Dendritic cell treated with granulocyte-macrophage colony-stimulating factor and Interleukin-4, amounts not matched to agents 40 ng/mL and 50 ng/mL, for 4 days (primary cell): ENCODE measurements at regions of chr1 and their contacts with region 1.

Region 1: GRCh38 chr1:64675718-64676345 is 69.0 kb upstream of the RAVER2 start:
- H3K4me3 Mint-ChIP-seq: no peak overlapping the region
- H3K27ac Mint-ChIP-seq: no peak overlapping the region
- H3K4me1 Mint-ChIP-seq: no peaks in the 10 kb centered on the region
- H3K27me3 Mint-ChIP-seq: no peaks in the 10 kb centered on the region

Region 2: DNA sequence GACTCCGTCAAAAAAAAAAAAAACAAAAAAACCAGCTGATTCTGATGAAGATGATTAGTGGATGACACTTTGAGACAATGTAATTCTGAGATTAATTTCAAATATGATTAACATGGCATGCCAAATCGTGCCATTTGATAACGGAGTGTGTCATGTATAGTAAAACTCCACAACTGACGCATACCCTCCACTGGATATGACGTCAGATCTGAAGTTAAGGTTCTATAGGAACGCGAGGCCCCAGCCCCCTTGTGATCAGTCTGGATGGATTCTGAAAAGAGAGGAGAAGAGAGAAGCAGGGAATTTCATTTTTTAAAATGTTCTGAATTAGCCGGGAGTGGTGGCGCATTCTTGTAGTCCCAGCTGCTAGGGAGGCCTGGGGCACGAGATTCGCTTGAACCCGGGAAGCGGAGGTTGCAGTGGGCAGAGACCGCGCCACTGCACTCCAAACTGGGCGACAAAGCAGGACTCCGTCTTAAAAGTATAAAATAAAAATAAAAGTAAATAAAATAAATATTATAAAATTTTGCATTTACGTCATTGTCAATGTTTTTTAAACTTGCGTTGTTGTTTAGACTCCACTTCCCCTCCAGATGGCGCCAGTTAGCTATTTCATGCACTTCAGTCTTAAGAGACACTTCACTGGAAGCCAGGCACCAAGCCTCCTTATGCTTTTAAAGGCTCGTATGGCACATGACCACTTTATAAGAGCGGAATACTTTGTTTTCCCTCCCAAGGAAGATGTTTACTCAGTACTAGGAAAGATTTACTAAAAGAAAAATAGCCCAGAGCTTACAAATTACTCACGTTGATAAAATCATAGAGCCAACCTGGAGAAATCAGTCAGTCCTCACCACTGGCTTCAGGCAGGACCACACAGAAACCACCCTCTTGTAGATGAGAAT is 406.9 kb before region 1 on chr1:
- intact Hi-C with region 1: loop called (anchors 2 kb)
- H3K4me3 Mint-ChIP-seq: no peak overlapping the region
- H3K27ac Mint-ChIP-seq: no peak overlapping the region
- H3K4me1 Mint-ChIP-seq: no peaks in the 10 kb centered on the region
- H3K27me3 Mint-ChIP-seq: no peaks in the 10 kb centered on the region

Region 3: DNA sequence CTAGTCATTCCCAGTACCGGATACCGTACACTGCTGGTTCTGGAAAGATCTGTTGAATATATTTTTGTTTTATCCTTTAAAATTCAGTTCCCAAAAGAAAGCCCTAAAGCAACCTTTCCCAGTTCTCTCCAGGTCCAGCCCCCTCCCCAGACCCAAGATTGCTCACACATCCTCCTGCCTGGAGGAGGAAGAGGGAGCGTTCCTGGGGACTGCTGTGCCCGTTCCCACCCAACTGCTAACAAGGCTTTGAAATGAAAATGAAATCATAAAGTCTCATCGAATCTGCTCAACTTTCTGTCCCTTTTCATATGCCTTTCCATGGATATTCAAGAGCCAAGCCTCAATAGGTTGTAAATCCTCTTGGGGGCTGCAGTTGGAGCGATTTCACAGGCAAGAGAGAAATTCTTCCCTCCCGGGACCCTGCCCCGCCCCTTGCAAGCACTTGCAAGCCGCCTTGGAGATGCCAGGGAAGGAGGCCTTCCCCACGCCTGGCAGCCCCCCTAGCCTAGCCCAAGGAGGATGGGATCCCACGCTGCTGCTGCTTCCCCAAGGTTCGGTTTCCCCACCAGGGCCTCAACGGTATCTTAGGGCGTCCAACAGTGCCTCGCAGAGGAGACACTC is 319.1 kb before region 1 on chr1:
- intact Hi-C with region 1: no loop called
- H3K4me3 Mint-ChIP-seq: no peak overlapping the region
- H3K27ac Mint-ChIP-seq: no peak overlapping the region
- H3K4me1 Mint-ChIP-seq: no peaks in the 10 kb centered on the region
- H3K27me3 Mint-ChIP-seq: peaks cover 1% of the 10 kb centered on the region

Region 4: DNA sequence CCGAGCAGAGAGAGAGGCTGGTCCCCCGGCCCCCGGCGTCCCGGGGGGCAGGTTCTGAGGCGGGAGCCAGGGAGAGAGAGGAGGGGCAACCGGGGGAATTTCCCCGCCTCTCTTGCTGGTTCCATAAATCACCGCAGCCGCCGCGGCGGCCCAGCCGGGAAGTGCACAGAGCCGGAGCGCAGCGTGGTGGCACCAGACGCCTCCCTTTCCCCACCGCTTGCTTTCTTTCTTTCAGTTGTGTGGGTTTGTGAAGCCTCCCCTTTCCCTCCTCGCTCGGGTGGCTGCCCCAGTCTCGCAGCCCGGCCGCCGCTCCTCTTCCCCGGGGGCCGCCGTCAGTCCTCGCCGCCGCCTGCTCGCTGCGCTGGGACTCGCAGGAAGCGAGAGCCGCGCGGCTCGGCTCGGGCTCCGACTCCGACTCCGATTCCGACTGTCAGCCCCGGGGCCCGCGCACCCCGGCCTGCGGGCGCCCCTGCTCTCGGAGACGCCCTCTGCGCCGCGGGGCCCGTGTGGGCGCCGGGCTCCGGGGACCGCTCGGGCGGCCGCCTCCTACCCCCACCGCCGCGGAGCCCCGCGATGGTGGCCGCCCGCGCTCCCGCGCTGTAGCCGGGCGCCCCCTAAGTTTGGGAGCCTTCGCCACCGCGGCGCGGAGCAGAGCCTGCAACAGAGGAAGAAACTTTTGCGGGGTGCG is 205.7 kb before region 1 on chr1 and contains the start of gene CACHD1:
- intact Hi-C with region 1: loop called (anchors 10 kb)
- H3K4me3 Mint-ChIP-seq: peak within 1 kb of the TSS; percentile 71
- H3K27ac Mint-ChIP-seq: no peak within 1 kb of the TSS
- H3K4me1 Mint-ChIP-seq: peaks cover 24% of the 10 kb centered on the region
- H3K27me3 Mint-ChIP-seq: peaks cover 57% of the 10 kb centered on the region

Region 5: DNA sequence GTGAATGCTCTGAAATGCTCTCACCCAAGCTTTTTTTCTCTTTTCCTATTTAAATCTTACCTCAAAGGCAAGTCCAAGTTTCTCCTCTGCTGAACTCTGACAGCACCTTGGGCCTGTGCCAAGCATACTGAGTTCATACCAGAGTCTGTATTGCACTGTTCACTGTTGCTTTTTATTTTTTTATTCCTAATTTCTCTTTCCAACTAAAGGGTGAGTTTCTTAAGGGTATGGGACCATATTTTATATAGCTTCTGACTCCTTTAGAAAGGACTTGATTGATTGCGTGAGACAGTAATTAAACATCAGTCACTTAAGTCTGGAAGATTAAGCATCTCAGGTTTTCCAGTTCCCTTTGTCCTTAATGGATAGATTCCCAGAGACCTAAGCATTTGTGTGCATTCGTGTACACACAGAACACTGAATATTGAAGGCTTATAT is 136.0 kb before region 1 on chr1:
- intact Hi-C with region 1: no loop called
- H3K4me3 Mint-ChIP-seq: no peak overlapping the region
- H3K27ac Mint-ChIP-seq: no peak overlapping the region
- H3K4me1 Mint-ChIP-seq: peaks cover 5% of the 10 kb centered on the region
- H3K27me3 Mint-ChIP-seq: no peaks in the 10 kb centered on the region

Region 6: DNA sequence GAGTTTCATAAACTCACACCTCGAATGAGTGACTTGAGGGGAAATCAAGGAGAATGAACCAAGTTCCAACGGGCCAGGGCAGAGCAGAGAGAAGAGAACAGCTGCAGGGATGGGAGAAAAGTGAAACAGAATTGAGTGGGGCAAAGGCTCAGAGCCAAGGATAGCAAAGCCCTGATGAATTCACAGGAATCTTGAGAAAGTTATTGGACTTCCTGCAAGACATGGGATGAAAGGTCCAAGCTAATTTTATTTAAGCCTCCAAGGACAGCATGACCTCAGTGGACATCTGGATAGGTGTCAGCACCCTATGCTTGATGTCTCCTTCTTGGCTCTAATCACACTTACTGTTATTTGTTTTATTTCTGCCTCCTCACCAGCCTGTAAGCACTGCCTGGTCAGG is 26.1 kb after region 1 on chr1:
- intact Hi-C with region 1: no loop called
- H3K4me3 Mint-ChIP-seq: no peak overlapping the region
- H3K27ac Mint-ChIP-seq: no peak overlapping the region
- H3K4me1 Mint-ChIP-seq: no peaks in the 10 kb centered on the region
- H3K27me3 Mint-ChIP-seq: no peaks in the 10 kb centered on the region